B cell (primary cell): ENCODE measurements at regions of chr11 and their contacts with region 1.

Region 1: DNA sequence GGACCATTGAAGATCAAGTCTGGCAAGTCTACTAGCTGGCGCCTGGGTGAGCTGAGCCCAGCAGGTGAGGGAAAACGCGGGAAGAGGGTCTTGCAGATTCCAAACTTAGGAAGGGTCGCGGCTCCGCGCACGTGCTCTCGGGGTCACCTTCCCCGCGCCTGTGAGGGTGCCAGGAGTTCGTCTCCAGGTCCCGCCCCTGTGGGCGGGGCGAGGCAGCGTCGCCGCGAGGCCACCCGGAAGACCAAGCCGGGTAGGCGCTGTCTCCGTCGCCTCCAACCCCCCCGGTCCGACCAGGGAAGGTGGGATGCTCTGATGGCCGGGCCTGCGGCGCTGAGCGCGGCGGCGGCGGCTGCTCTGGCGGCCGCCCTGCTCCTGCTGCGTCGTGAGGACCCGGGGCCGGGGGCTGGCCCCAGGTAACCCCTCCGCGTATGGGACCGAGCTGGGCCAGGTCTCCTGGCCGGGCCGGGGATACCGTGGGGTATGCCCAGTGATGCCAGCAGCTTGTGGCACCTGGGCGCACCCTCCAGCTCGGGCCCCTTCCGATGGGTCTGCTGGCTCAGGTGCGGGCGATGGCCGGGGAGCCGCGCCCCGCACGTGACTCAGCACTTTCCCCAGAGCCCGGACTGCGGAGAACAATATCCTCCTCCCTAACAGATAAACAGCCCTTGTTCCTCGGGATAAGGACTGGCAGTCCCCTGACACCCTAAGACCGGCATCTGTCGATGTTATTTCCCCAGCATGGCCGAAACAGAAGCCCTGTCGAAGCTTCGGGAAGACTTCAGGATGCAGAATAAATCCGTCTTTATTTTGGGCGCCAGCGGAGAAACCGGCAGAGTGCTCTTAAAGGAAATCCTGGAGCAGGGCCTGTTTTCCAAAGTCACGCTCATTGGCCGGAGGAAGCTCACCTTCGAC is at the start of gene HTATIP2:
- DNase-seq: peak; percentile 80
- ATAC-seq: peak; percentile 92
- H3K4me3 ChIP-seq: peak within 1 kb of the TSS; percentile 75 to 88 (median 80)
- H3K4me3 Mint-ChIP-seq: peak within 1 kb of the TSS; percentile 88
- H3K27ac ChIP-seq: peak within 1 kb of the TSS; percentile 57 to 82
- H3K27ac Mint-ChIP-seq: peak within 1 kb of the TSS; percentile 89
- H3K4me1 ChIP-seq: peaks cover 22 to 31% of the 10 kb centered on the region in 2 donors
- H3K4me1 Mint-ChIP-seq: peaks cover 57% of the 10 kb centered on the region
- H3K27me3 ChIP-seq: no peaks in the 10 kb centered on the region
- H3K27me3 Mint-ChIP-seq: no peaks in the 10 kb centered on the region
- CTCF ChIP-seq: no peak
- total RNA-seq, gene HTATIP2: 30.6 and 31.2 TPM in 2 replicates

Region 2: DNA sequence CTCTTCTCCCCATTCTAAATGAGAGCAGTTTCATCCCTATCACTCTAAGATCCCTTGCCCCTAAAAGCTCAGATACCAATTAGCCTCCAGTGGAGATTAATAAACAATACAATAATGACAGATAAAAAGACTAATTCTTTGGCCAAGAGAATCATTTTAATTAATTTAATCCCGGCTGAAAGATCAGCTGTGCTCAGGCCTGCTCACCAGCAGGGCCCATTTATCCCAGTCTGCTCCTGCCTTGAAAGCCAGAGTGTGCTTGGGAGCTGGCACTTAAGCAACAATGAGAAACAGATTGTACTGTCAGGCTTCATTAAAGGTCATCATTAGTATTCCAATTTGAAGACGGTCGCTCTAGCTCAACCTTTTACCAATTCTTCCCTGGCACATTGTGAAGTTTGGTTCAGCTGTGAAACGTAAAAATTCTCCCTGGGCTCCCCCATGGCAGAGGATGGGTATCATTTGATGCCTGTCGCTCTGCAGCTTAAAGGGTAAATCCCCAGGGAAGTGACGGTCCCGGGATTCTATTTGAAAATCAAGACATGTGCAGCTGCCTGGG is 36.3 kb before region 1 on chr11:
- CTCF ChIA-PET with region 1: no interaction called
- POLR2A ChIA-PET with region 1: no interaction called
- intact Hi-C with region 1: no loop called
- DNase-seq: no peak
- ATAC-seq: no peak
- H3K4me3 ChIP-seq: no peak overlapping the region
- H3K4me3 Mint-ChIP-seq: no peak overlapping the region
- H3K27ac ChIP-seq: no peak overlapping the region
- H3K27ac Mint-ChIP-seq: no peak overlapping the region
- H3K4me1 ChIP-seq: no peaks in the 10 kb centered on the region
- H3K4me1 Mint-ChIP-seq: no peaks in the 10 kb centered on the region
- H3K27me3 ChIP-seq: peaks cover 0 to 3% (median 1%) of the 10 kb centered on the region in 4 experiments
- H3K27me3 Mint-ChIP-seq: peaks cover 35% of the 10 kb centered on the region
- CTCF ChIP-seq: no peak

Region 3: GRCh38 chr11:20387241-20388095 is 23.7 kb after region 1 on chr11 and contains the start of gene PRMT3:
- CTCF ChIA-PET with region 1: interaction called, 7 read pairs
- POLR2A ChIA-PET with region 1: interaction called, 3 read pairs
- intact Hi-C with region 1: loop called (anchors 1 kb)
- DNase-seq: peak; percentile 99
- ATAC-seq: peak; percentile 86
- H3K4me3 ChIP-seq: peak within 1 kb of the TSS; percentile 72 to 95 (median 92)
- H3K4me3 Mint-ChIP-seq: peak within 1 kb of the TSS; percentile 96
- H3K27ac ChIP-seq: peak within 1 kb of the TSS; percentile 82 to 92
- H3K27ac Mint-ChIP-seq: peak within 1 kb of the TSS; percentile 100
- H3K4me1 ChIP-seq: peaks cover 11 to 15% of the 10 kb centered on the region in 2 donors
- H3K4me1 Mint-ChIP-seq: peaks cover 23% of the 10 kb centered on the region
- H3K27me3 ChIP-seq: no peaks in the 10 kb centered on the region
- H3K27me3 Mint-ChIP-seq: no peaks in the 10 kb centered on the region
- CTCF ChIP-seq: peak; percentile 92
- total RNA-seq, gene PRMT3: 18.3 and 19.8 TPM in 2 replicates

Region 4: DNA sequence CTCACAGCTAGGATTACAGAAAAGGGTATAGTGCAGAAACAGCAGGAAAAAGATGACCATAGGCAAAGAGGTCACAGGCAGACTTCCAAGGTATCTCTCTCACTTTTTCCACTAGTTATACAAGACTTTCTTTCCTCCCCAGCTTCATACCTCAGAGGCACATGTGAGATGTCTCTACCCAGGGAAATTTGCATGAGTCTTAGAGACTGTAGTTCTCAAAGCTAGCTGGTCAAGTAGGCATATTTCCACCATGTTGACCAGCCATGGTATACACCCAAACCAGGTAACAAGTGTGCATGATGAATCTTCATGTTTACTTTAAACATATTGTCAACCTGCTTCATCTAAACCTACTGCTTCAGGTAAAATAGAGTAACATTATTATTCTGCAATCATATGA is 51.7 kb after region 1 on chr11:
- CTCF ChIA-PET with region 1: no interaction called
- POLR2A ChIA-PET with region 1: no interaction called
- intact Hi-C with region 1: no loop called
- DNase-seq: no peak
- ATAC-seq: no peak
- H3K4me3 ChIP-seq: no peak overlapping the region
- H3K4me3 Mint-ChIP-seq: no peak overlapping the region
- H3K27ac ChIP-seq: no peak overlapping the region
- H3K27ac Mint-ChIP-seq: no peak overlapping the region
- H3K4me1 ChIP-seq: no peaks in the 10 kb centered on the region
- H3K4me1 Mint-ChIP-seq: no peaks in the 10 kb centered on the region
- H3K27me3 ChIP-seq: no peaks in the 10 kb centered on the region
- H3K27me3 Mint-ChIP-seq: no peaks in the 10 kb centered on the region
- CTCF ChIP-seq: no peak